ENCODE measurements at regions of chr6 and their contacts with region 1.

Region 1: GRCh38 chr6:45377554-45378333 is at the start of gene SUPT3H:
- DNase-seq: peak; percentile 98
- ATAC-seq: peak; percentile 86
- H3K4me3 Mint-ChIP-seq: peak within 1 kb of the TSS; percentile 96
- H3K27ac Mint-ChIP-seq: peak within 1 kb of the TSS; percentile 99
- H3K4me1 Mint-ChIP-seq: peaks cover 18% of the 10 kb centered on the region
- H3K27me3 Mint-ChIP-seq: no peaks in the 10 kb centered on the region
- CTCF ChIP-seq: peak; percentile 19
- total RNA-seq, gene SUPT3H: 20.0 to 20.2 TPM

Region 2: GRCh38 chr6:45163952-45164766 is 213.6 kb before region 1 on chr6:
- CTCF ChIA-PET with region 1: no interaction called
- POLR2A ChIA-PET with region 1: no interaction called
- intact Hi-C with region 1: loop called (anchors 10 kb)
- DNase-seq: peak; percentile 69
- ATAC-seq: peak; percentile 93
- H3K4me3 Mint-ChIP-seq: peak overlapping the region; percentile 36
- H3K27ac Mint-ChIP-seq: peak overlapping the region; percentile 91
- H3K4me1 Mint-ChIP-seq: peaks cover 61% of the 10 kb centered on the region
- H3K27me3 Mint-ChIP-seq: no peaks in the 10 kb centered on the region
- CTCF ChIP-seq: no peak

Region 3: GRCh38 chr6:45388328-45388727 is 10.6 kb after region 1 on chr6:
- CTCF ChIA-PET with region 1: interaction called, 5 read pairs
- POLR2A ChIA-PET with region 1: interaction called, 10 read pairs
- intact Hi-C with region 1: no loop called
- DNase-seq: no peak
- ATAC-seq: no peak
- H3K4me3 Mint-ChIP-seq: no peak overlapping the region
- H3K27ac Mint-ChIP-seq: no peak overlapping the region
- H3K4me1 Mint-ChIP-seq: peaks cover 4% of the 10 kb centered on the region
- H3K27me3 Mint-ChIP-seq: no peaks in the 10 kb centered on the region
- CTCF ChIP-seq: no peak

Region 4: GRCh38 chr6:45421709-45422502 is 44.2 kb after region 1 on chr6:
- CTCF ChIA-PET with region 1: interaction called, 5 read pairs
- POLR2A ChIA-PET with region 1: interaction called, 20 read pairs
- intact Hi-C with region 1: no loop called
- DNase-seq: peak; percentile 71
- ATAC-seq: peak; percentile 25
- H3K4me3 Mint-ChIP-seq: peak overlapping the region; percentile 94
- H3K27ac Mint-ChIP-seq: peak overlapping the region; percentile 95
- H3K4me1 Mint-ChIP-seq: peaks cover 29% of the 10 kb centered on the region
- H3K27me3 Mint-ChIP-seq: no peaks in the 10 kb centered on the region
- CTCF ChIP-seq: no peak